Ascending aorta (tissue), 2 donors: ENCODE measurements at regions of chr5 and their contacts with region 1.

Region 1: DNA sequence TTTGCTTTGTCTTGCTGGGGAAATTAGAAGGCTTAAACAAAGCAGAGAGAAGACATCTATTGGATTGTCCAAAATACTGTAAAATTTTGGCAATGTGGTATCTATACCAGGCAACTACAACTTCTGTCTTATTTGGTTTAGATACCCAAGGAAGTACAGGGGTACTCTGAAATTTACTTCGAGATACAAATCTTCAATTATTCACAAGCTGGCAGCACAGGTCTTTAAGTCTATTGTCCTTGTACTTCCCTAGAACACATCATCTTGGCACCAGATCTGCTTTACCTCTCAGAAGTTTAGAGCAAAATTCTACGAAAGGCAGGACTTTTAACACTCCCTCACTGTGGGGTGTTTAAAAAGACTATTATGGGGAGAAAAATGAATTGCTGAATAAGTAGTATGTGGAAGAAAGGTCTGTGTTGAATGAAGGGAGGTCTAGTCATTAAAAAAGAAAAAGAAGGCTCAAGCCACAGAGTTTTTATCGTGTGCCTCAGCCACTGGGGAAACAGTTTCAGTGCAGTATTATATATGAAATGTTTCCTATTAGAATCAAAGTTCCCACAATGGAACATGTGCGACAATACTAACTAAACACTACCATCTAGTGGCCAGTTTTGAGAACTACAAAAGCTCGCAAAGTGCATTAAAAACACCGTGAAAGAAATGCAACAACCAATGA is 93.7 kb downstream of the PDE4D start:
- DNase-seq: no peak
- H3K4me3 ChIP-seq: no peak overlapping the region
- H3K27ac ChIP-seq: no peak overlapping the region
- H3K4me1 ChIP-seq: peaks cover 0 to 15% of the 10 kb centered on the region in 2 donors
- H3K27me3 ChIP-seq: no peaks in the 10 kb centered on the region
- CTCF ChIP-seq: peak; percentile 56 to 72 (median 69)

Region 2: GRCh38 chr5:59188419-59189225 is 611.2 kb before region 1 on chr5:
- intact Hi-C with region 1: loop called (anchors 5 kb)
- DNase-seq: peak in 1 of 2 donors; percentile 80
- H3K4me3 ChIP-seq: no peak overlapping the region
- H3K27ac ChIP-seq: no peak overlapping the region
- H3K4me1 ChIP-seq: no peaks in the 10 kb centered on the region
- H3K27me3 ChIP-seq: no peaks in the 10 kb centered on the region
- CTCF ChIP-seq: peak; percentile 62 to 79 (median 69)

Region 3: GRCh38 chr5:59390074-59390659 is 409.6 kb before region 1 on chr5:
- intact Hi-C with region 1: loop called (anchors 2 kb)
- DNase-seq: no peak
- H3K4me3 ChIP-seq: no peak overlapping the region
- H3K27ac ChIP-seq: no peak overlapping the region
- H3K4me1 ChIP-seq: no peaks in the 10 kb centered on the region
- H3K27me3 ChIP-seq: no peaks in the 10 kb centered on the region
- CTCF ChIP-seq: peak; percentile 31 to 65 (median 58)

Region 4: DNA sequence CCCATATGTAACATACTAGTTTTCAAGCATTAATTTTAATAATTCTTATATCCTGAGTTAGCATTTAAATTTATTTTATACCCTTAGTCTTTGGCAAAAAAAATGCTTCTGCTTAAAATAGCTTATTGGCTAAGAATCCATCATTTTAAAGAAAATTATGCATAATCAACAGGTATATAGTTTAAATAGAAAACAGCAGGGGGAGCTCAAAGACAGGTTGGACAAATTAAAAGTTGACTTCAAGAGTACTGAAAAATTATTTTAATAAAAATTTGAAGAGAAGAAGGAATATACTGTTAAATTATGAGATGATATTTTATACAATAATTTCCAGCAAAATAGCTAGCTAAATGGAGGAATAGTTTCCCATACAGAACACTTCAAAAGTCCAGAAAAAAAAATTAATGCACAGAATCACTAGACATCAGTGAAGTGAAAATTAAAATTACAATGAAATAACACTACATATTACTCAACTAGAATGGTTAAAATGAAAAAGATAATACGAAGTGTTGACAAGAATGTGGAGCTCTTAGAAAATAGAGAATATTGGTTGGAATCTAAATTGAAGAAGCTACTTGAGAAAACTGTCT is 293.4 kb before region 1 on chr5:
- intact Hi-C with region 1: loop called (anchors 5 kb)
- DNase-seq: no peak
- H3K4me3 ChIP-seq: no peak overlapping the region
- H3K27ac ChIP-seq: no peak overlapping the region
- H3K4me1 ChIP-seq: no peaks in the 10 kb centered on the region
- H3K27me3 ChIP-seq: no peaks in the 10 kb centered on the region
- CTCF ChIP-seq: peak; percentile 6 to 47 (median 39)